ENCODE measurements at regions of chr13 and their contacts with region 1.

Region 1: DNA sequence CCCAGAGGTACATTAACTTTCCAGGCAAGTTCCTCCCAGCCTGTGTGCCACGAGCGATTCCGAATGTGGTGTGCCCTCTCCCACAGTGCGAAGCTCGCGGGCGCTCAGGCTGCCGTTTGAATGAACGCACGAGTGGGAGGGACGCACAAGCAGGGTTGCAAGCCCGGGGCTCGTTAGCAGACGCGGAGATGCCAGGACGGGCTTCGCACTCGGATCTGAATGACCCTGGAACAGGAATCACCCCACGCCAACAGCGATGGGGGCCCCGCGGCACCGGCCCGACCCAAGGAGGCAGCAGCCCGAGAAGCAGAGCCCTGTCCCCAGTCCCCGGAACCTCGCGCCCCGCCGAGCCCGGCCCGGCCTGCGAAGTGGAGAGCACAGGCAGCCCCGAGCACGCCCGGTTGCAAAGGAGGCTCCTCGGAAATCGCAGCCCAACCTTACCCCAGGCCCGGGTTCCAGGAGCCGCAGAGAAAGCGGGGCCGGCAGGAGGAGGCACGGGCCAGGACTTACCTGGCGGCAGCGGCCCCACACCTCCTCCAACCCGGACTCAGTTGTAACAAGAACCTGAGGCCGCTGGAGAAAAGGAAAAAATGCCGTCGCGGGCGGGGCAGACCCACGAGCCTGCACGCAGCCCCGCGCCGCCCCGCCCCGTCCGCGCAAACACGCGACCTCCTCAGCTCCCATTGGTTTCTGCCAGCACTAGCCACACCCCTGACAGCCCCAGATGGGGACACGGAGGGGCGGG is at the start of gene SLC25A30:
- DNase-seq: peak; percentile 98
- H3K4me3 ChIP-seq: peak within 1 kb of the TSS; percentile 56
- H3K27ac ChIP-seq: peak within 1 kb of the TSS; percentile 83
- H3K4me1 ChIP-seq: no peaks in the 10 kb centered on the region
- H3K27me3 ChIP-seq: no peaks in the 10 kb centered on the region
- CTCF ChIP-seq: no peak
- total RNA-seq, gene SLC25A30: 9.2 TPM

Region 2: DNA sequence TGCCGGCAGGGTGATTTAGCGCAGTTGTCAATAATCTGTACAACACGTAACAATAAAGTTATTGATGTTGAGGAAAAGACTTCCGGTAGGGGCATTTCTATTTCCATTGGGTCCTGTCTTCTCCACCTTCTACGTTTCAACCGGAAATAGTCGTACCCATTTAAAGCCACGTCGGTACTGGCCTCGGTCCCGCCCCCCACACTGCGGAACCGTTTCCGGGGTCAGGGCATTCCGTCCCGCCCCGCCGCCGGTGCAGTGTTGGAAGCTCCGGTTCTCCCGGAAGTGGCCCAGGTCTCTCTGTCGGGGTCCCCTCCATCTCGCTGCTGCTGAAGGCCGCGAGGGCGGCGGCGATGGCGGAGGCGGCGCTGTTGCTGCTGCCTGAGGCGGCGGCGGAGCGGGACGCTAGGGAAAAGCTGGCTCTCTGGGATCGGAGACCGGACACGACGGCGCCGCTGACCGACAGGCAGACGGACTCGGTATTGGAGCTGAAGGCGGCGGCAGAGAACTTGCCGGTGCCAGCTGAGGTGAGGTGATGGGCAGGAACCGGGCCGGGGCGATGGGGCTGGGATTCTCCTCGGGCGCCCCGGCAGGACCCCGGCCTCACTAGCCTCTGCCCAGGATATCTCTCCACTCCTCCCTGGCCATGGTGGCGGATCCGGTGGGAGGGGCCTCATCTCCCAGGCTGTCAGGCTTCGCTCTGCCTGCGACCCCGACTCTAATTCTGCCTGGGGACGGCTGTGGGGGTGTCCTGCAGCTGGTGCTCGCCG is 46.9 kb after region 1 on chr13 and contains the start of gene COG3:
- intact Hi-C with region 1: loop called (anchors 5 kb)
- DNase-seq: peak; percentile 97
- H3K4me3 ChIP-seq: peak within 1 kb of the TSS; percentile 99
- H3K27ac ChIP-seq: peak within 1 kb of the TSS; percentile 97
- H3K4me1 ChIP-seq: peaks cover 16% of the 10 kb centered on the region
- H3K27me3 ChIP-seq: no peaks in the 10 kb centered on the region
- CTCF ChIP-seq: peak; percentile 49
- total RNA-seq, gene COG3: 39.0 to 49.8 TPM